ENCODE measurements at regions of chr6 and their contacts with region 1.

Region 1: GRCh38 chr6:134477991-134478635 is 160.2 kb upstream of the SGK1 start:
- DNase-seq: no peak
- ATAC-seq: no peak
- H3K4me3 ChIP-seq: no peak overlapping the region
- H3K4me3 Mint-ChIP-seq: no peak overlapping the region
- H3K27ac ChIP-seq: no peak overlapping the region
- H3K27ac Mint-ChIP-seq: no peak overlapping the region
- H3K4me1 ChIP-seq: no peaks in the 10 kb centered on the region
- H3K4me1 Mint-ChIP-seq: no peaks in the 10 kb centered on the region
- H3K27me3 ChIP-seq: no peaks in the 10 kb centered on the region
- H3K27me3 Mint-ChIP-seq: no peaks in the 10 kb centered on the region
- CTCF ChIP-seq: no peak

Region 2: GRCh38 chr6:134453870-134454510 is 24.1 kb before region 1 on chr6:
- CTCF ChIA-PET with region 1: no interaction called
- POLR2A ChIA-PET with region 1: interaction called, 13 read pairs
- intact Hi-C with region 1: no loop called
- DNase-seq: no peak
- ATAC-seq: no peak
- H3K4me3 ChIP-seq: no peak overlapping the region
- H3K4me3 Mint-ChIP-seq: no peak overlapping the region
- H3K27ac ChIP-seq: no peak overlapping the region
- H3K27ac Mint-ChIP-seq: no peak overlapping the region
- H3K4me1 ChIP-seq: no peaks in the 10 kb centered on the region
- H3K4me1 Mint-ChIP-seq: no peaks in the 10 kb centered on the region
- H3K27me3 ChIP-seq: no peaks in the 10 kb centered on the region
- H3K27me3 Mint-ChIP-seq: no peaks in the 10 kb centered on the region
- CTCF ChIP-seq: no peak

Measured in B cell (primary cell).